Panc1 (cell line): ENCODE measurements at regions of chr5 and their contacts with region 1.

Region 1: GRCh38 chr5:130720355-130720754 is 444.7 kb downstream of the HINT1 start:
- DNase-seq: no peak
- ATAC-seq: peak; percentile 86
- H3K4me3 ChIP-seq: no peak overlapping the region
- H3K27ac ChIP-seq: no peak overlapping the region
- H3K4me1 ChIP-seq: no peaks in the 10 kb centered on the region
- H3K27me3 ChIP-seq: no peaks in the 10 kb centered on the region
- CTCF ChIP-seq: peak; percentile 57; the same call in 1 of the 2 replicates

Region 2: GRCh38 chr5:130109152-130109551 is 611.2 kb before region 1 on chr5:
- CTCF ChIA-PET with region 1: no interaction called
- POLR2A ChIA-PET with region 1: no interaction called
- in situ Hi-C with region 1: no loop called
- intact Hi-C with region 1: loop called (anchors 10 kb)
- DNase-seq: no peak
- ATAC-seq: no peak
- H3K4me3 ChIP-seq: no peak overlapping the region
- H3K27ac ChIP-seq: no peak overlapping the region
- H3K4me1 ChIP-seq: no peaks in the 10 kb centered on the region
- H3K27me3 ChIP-seq: no peaks in the 10 kb centered on the region
- CTCF ChIP-seq: peak; percentile 62; the same call in 1 of the 2 replicates

Region 3: DNA sequence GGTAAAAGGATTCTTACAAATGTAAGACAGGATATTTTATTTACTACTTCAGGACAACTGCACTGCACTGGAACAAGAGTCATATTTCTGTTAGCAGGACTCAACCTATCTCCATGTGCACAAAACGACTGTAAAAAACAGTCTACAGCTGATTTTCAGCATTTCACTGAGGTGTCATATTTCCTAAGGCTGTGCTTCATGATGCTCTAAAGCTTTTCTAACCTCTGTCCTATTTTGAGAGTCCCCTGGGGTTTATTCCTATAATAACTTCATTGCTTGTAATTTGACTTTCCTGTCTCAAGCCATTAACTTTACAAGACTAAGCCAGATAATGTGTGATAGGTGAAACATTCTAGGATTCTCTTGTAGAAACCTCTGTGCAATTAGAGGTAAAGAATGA is 27.6 kb before region 1 on chr5:
- CTCF ChIA-PET with region 1: no interaction called
- POLR2A ChIA-PET with region 1: no interaction called
- in situ Hi-C with region 1: no loop called
- intact Hi-C with region 1: no loop called
- DNase-seq: no peak
- ATAC-seq: no peak
- H3K4me3 ChIP-seq: no peak overlapping the region
- H3K27ac ChIP-seq: no peak overlapping the region
- H3K4me1 ChIP-seq: no peaks in the 10 kb centered on the region
- H3K27me3 ChIP-seq: 0 out of 2 replicates have a peak, but pooled peaks cover 2% of the 10 kb centered on the region
- CTCF ChIP-seq: no peak